ENCODE measurements at regions of chr22 and their contacts with region 1.

Region 1: DNA sequence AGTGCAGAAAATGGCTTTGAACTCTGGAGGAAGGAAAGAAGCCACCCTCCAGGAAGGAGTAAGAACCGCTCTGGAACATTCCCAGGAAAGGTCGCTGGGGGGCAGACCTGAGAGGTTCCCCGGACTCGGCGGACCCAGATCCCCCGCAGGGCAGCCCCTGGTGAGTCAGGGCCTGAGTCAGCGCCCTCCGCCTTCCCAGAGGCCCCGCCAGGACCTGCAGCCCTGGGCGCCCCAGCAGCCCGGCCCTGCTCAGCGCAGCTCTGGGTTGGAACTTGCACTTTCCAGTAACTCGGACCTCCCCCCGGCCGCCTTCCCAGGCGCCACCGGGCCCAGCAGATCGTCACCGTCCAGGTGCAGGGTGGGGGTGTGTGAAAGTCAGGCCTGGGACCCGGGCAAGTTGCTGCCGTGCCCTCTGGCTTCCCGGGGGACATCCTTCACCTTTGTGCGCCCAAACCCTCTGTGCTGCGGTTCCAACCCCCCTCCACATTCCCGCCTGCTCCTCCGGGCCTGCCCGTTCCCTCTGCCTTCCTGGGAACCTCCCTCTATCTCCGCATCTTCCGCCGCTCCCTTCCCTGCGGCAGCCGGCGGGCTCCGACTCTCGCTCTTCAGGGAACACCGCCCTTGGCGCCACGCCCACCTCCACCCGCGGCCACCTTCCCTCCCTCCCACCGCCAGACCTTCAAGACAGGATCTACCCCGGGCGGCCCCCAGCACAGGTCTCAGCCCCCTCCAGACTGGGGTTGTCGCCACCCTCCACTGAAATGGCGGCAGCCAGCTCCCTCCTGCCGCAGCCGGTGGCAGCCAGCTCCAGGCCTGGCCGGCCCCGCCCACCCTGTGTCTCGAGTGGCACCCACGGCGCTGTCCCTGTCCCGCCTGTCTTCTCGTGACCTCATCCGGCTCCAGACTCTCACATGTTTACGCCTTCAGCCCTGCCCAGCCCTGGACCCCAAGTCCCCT is 36.8 kb upstream of the WNT7B start:
- DNase-seq: peak; percentile 97
- H3K4me3 Mint-ChIP-seq: peak overlapping the region; percentile 72
- H3K27ac Mint-ChIP-seq: peak overlapping the region; percentile 86
- H3K4me1 Mint-ChIP-seq: peaks cover 13% of the 10 kb centered on the region
- H3K27me3 Mint-ChIP-seq: no peaks in the 10 kb centered on the region
- CTCF ChIP-seq: peak; percentile 65

Region 2: DNA sequence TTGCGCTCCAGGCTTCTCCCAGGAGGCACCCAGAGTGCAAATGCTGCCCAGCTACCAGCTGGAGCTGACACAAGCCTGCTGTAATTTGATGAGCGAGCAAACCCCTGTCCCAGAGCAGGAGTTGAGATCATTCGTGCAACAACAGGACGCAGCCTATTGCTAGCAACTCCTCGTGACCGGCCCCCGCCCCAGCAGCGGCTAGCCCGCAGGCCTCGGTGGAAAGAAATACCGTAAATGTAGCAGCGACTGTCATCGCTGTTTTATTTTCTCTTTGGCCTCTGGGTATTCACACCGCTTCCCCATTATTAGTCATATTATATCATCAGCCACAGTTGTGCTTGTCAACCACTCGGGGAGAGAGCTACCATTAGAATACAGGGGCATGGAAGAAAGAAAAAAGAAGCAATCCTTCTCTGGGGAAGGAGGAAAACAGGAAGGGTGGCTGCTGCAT is 401.3 kb before region 1 on chr22:
- CTCF ChIA-PET with region 1: no interaction called
- POLR2A ChIA-PET with region 1: no interaction called
- intact Hi-C with region 1: no loop called
- DNase-seq: peak; percentile 81
- H3K4me3 Mint-ChIP-seq: peak overlapping the region; percentile 51
- H3K27ac Mint-ChIP-seq: peak overlapping the region; percentile 21
- H3K4me1 Mint-ChIP-seq: peaks cover 22% of the 10 kb centered on the region
- H3K27me3 Mint-ChIP-seq: no peaks in the 10 kb centered on the region
- CTCF ChIP-seq: no peak

Region 3: DNA sequence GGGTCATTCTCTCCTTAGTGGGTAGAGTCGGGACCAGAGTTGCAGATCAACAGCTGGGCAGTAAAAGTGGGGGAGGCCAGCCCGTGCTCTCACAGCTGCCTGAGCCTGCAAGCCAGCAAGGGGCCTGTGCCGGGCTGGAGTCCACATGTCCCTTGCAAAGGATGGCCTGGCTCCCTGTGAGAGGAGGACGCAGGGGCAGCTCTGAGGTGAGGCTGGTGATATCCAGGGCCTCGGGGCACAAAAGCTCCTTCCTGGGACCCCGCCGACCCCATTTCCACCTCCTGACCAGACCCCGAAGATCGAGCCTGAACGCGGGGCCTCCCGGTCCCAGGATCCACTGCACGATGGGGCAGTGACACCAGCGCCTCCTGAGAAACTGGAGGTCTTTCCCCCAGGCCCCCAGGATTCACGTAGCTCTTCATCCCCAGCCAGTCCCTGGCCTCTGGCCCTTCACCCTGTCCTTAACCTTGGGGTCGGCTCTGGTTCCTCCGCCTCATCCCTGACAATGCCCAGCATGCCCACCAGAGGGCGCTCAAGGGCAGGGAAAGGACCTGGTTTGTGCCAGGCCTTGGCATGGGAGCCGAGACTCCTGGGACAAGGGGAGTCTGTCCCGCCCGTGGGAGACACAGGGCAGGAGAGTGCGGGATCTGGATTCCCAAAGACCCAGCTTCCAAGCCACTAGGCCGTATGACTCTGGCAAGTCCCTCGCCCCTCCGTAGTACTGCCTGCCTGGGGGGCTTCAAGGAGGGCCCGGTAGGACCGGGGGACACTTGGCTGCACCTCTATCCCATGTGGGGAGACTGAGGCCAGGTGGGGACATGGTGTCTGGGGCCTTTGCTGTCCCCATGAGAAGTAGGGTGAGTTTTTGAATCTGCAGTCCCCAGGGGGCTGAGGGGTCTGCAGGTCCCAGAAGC is 19.0 kb before region 1 on chr22:
- CTCF ChIA-PET with region 1: interaction called, 56 read pairs
- POLR2A ChIA-PET with region 1: interaction called, 3 read pairs
- intact Hi-C with region 1: no loop called
- DNase-seq: peak; percentile 78
- H3K4me3 Mint-ChIP-seq: no peak overlapping the region
- H3K27ac Mint-ChIP-seq: no peak overlapping the region
- H3K4me1 Mint-ChIP-seq: no peaks in the 10 kb centered on the region
- H3K27me3 Mint-ChIP-seq: no peaks in the 10 kb centered on the region
- CTCF ChIP-seq: peak; percentile 96

Region 4: DNA sequence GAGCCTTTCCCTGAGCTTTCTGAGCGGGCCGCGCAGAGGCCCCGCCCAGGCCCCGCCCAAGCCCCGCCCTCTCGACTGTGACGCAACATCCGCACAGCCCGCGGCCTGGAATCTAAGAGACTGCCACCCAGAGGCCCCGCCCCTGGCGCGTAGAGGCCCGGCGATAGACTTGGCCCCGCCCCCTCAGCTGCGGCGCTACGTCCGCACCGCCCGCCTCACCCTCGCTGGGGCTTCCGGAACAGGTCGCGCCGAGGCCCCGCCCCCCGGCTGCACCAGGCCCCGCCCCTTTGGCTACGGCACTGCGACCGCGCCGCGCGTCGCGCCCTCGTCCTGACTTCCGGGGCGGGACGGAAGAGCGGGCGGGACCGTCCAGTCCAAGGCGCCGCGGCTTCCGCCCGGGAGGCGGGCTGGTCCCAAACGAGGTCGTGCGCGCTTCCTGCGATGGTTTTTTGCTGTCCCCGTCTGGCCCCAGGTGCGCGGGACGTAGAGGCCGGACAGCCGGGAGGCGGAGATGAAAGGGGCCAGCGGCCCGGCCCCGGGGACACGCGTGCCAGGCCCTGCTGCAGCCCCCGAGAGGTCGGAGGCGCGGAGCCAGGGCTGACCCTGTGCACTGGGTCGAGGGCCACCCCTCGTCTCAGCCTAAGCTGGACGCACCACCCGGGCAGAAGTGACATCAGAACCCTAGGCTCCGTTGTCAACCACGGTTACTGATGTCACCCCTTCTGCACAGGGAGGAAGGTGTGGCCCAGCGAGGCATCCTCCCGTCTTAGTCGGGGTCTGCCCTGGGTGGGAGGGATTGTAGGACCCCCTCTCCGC is 22.2 kb after region 1 on chr22:
- CTCF ChIA-PET with region 1: interaction called, 39 read pairs
- POLR2A ChIA-PET with region 1: interaction called, 76 read pairs
- intact Hi-C with region 1: loop called (anchors 1 kb)
- DNase-seq: peak; percentile 98
- H3K4me3 Mint-ChIP-seq: peak overlapping the region; percentile 75
- H3K27ac Mint-ChIP-seq: peak overlapping the region; percentile 75
- H3K4me1 Mint-ChIP-seq: peaks cover 4% of the 10 kb centered on the region
- H3K27me3 Mint-ChIP-seq: no peaks in the 10 kb centered on the region
- CTCF ChIP-seq: no peak

Region 5: GRCh38 chr22:46057762-46058420 is 44.2 kb after region 1 on chr22:
- CTCF ChIA-PET with region 1: interaction called, 47 read pairs
- POLR2A ChIA-PET with region 1: interaction called, 533 read pairs
- intact Hi-C with region 1: loop called (anchors 1 kb)
- DNase-seq: peak; percentile 87
- H3K4me3 Mint-ChIP-seq: peak overlapping the region; percentile 81
- H3K27ac Mint-ChIP-seq: peak overlapping the region; percentile 98
- H3K4me1 Mint-ChIP-seq: peaks cover 33% of the 10 kb centered on the region
- H3K27me3 Mint-ChIP-seq: no peaks in the 10 kb centered on the region
- CTCF ChIP-seq: no peak

Region 6: DNA sequence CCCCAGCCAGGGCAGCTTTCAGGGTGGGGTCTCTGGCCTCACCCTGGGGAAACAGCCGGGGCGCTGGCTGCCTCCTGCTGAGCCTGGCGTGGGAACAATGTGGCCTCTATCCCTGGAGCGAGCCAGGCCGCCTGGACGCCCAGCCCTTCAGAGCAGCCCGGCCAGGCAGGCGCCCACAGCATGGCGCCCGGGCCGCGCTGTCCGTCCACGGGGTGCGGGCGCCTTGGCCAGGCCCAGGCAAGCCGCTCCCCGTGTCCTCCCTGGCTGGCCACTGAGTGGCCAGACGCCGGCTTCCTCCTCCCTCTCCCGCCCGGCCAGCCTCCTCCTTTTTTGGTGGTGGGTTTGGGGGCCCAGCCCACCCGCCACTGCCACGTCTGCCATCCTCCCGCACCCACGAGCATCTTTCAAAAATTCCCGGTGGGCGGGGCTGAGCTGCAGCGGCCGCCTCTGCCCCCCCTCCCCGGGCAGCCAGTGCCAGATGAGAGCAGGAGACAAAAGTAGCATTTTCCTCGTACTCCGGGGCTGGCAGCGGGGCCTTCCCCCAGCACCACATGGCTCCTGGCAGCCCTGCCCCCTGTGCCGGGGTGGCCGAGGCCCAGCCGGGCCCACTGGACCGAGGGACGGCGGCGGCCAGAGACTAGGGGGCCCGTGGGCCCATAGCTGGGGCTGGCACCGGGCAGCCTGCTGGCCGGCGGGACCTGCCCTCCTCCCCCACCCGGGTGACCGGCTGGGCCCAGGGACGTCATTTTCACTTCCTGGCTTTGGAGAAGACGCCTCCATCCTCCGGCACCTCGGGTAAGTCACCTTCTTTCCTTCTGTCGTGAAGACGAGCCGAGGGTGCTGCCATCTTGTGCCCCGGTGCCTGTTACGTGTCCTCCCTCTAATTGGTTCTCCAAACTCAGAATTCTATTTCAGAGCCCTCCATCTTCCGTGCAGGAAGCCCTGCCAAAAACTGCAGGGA is 66.4 kb after region 1 on chr22:
- CTCF ChIA-PET with region 1: interaction called, 7 read pairs
- POLR2A ChIA-PET with region 1: interaction called, 193 read pairs
- intact Hi-C with region 1: no loop called
- DNase-seq: peak; percentile 90
- H3K4me3 Mint-ChIP-seq: peak overlapping the region; percentile 96
- H3K27ac Mint-ChIP-seq: peak overlapping the region; percentile 100
- H3K4me1 Mint-ChIP-seq: peaks cover 27% of the 10 kb centered on the region
- H3K27me3 Mint-ChIP-seq: no peaks in the 10 kb centered on the region
- CTCF ChIP-seq: no peak